SK-N-SH (cell line): ENCODE measurements at regions of chr16 and their contacts with region 1.

Region 1: DNA sequence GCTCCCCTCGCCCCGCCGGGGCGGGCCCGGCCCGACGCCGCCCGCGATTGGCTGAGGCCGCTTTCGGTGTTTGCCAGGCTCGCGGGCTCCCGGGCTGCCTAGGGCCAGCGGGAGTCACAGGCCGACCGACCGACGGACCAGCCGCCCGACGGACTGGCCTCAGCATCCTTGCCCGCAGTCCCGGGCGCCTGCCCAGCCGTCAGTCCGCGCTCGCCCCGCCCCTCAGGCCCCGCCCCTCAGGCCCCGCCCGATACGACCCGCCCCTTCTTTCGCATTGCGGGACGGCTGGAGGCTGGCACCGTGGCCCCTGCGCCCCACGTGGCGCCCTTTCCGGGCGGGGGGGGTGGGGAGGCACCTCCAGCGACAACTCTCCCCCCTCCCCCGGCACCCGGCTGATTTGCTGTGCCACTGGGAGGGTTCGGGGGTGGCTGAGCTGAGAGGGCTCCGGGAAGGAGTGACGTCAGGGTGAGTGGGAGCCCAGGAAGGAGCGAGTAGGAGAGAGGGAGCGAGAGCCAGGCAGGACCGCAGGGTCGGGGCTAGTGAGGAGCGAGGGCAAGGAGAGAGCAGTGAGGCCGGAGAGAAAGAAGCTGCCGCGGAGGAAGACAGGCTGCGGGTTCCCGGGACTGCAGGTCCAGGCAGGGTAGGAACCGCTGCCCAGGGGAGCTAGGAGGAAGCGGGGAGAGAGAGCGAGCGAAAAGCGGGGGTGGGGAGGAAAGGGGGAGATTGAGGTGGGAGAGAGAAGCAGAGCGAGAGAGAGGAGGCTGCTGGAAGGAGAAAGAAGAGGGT is at the start of gene ASPHD1:
- DNase-seq: peak; percentile 92
- H3K4me3 ChIP-seq: peak within 1 kb of the TSS; percentile 54 to 89
- H3K27ac ChIP-seq: peak within 1 kb of the TSS; percentile 90 to 94
- H3K4me1 ChIP-seq: peaks cover 0 to 20% of the 10 kb centered on the region in 2 experiments; a peak in 1 of 4 replicates
- H3K27me3 ChIP-seq: no peaks in the 10 kb centered on the region
- CTCF ChIP-seq: no peak
- EP300 ChIP-seq: no peak
- RAD21 ChIP-seq: no peak
- polyA plus RNA-seq, gene ASPHD1: 29.0 and 35.1 TPM in 2 replicates

Region 2: DNA sequence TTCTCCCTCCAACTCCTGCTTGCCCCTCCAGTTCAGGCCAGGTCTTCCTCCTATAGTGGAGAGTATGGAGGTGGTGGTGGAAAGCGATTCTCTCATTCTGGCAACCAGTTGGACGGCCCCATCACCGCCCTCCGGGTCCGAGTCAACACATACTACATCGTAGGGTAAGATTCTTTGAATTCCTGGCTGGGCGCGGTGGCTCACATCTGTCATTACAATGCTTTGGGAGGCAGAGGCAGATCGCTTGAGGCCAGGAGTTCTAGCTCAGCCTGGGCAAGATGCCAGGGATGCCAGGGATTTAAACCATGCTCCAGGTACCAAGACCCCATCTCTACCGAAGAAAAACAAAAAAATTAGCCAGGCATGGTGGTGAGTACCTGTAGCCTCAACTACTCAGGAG is 120.8 kb before region 1 on chr16:
- CTCF ChIA-PET with region 1: no interaction called
- POLR2A ChIA-PET with region 1: no interaction called
- DNase-seq: no peak
- H3K4me3 ChIP-seq: no peak overlapping the region
- H3K27ac ChIP-seq: no peak overlapping the region
- H3K4me1 ChIP-seq: no peaks in the 10 kb centered on the region
- H3K27me3 ChIP-seq: peaks cover 7% of the 10 kb centered on the region; the same call in 1 of the 2 replicates
- CTCF ChIP-seq: no peak
- EP300 ChIP-seq: no peak
- RAD21 ChIP-seq: no peak

Region 3: GRCh38 chr16:29815793-29816693 is 84.3 kb before region 1 on chr16 and contains the start of gene PAGR1:
- CTCF ChIA-PET with region 1: interaction called, 13 read pairs
- POLR2A ChIA-PET with region 1: interaction called, 4 read pairs
- DNase-seq: peak; percentile 93
- H3K4me3 ChIP-seq: peak within 1 kb of the TSS; percentile 72 to 77
- H3K27ac ChIP-seq: peak within 1 kb of the TSS; percentile 64 to 94
- H3K4me1 ChIP-seq: peaks cover 26 to 55% of the 10 kb centered on the region in 2 experiments; a peak in 3 of 4 replicates
- H3K27me3 ChIP-seq: no peaks in the 10 kb centered on the region
- CTCF ChIP-seq: peak; percentile 86
- EP300 ChIP-seq: no peak
- RAD21 ChIP-seq: peak; percentile 65
- polyA plus RNA-seq, gene PAGR1: 48.5 and 57.7 TPM in 2 replicates

Region 4: GRCh38 chr16:29839822-29840221 is 60.5 kb before region 1 on chr16:
- CTCF ChIA-PET with region 1: no interaction called
- POLR2A ChIA-PET with region 1: no interaction called
- DNase-seq: no peak
- H3K4me3 ChIP-seq: no peak overlapping the region
- H3K27ac ChIP-seq: no peak overlapping the region
- H3K4me1 ChIP-seq: no peaks in the 10 kb centered on the region
- H3K27me3 ChIP-seq: no peaks in the 10 kb centered on the region
- CTCF ChIP-seq: no peak
- EP300 ChIP-seq: no peak
- RAD21 ChIP-seq: no peak

Region 5: DNA sequence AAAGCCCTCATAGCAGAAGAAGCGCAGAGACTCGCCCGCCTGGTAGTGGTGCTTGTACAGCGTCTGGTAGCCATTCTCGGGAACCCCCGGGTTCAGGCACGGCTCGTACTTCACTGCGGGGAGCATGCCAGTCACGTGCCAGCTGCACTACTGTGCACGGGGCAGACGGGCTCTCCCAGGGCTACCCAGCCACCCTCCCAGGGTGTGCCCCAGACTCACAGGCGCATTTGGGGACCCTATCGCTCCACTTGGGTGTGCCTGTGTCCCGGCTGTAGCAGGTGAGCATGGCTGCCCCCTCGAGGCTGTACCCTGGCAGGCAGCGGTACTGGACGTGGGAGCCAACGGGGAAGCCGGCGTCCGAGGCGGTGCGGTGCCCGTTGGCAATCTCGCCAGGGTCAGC is 27.0 kb before region 1 on chr16:
- CTCF ChIA-PET with region 1: no interaction called
- POLR2A ChIA-PET with region 1: no interaction called
- DNase-seq: no peak
- H3K4me3 ChIP-seq: no peak overlapping the region
- H3K27ac ChIP-seq: no peak overlapping the region
- H3K4me1 ChIP-seq: no peaks in the 10 kb centered on the region
- H3K27me3 ChIP-seq: no peaks in the 10 kb centered on the region
- CTCF ChIP-seq: no peak
- EP300 ChIP-seq: no peak
- RAD21 ChIP-seq: no peak

Region 6: GRCh38 chr16:29883987-29884386 is 16.3 kb before region 1 on chr16:
- CTCF ChIA-PET with region 1: no interaction called
- POLR2A ChIA-PET with region 1: no interaction called
- DNase-seq: no peak
- H3K4me3 ChIP-seq: no peak overlapping the region
- H3K27ac ChIP-seq: no peak overlapping the region
- H3K4me1 ChIP-seq: no peaks in the 10 kb centered on the region
- H3K27me3 ChIP-seq: no peaks in the 10 kb centered on the region
- CTCF ChIP-seq: no peak
- EP300 ChIP-seq: no peak
- RAD21 ChIP-seq: no peak

Region 7: DNA sequence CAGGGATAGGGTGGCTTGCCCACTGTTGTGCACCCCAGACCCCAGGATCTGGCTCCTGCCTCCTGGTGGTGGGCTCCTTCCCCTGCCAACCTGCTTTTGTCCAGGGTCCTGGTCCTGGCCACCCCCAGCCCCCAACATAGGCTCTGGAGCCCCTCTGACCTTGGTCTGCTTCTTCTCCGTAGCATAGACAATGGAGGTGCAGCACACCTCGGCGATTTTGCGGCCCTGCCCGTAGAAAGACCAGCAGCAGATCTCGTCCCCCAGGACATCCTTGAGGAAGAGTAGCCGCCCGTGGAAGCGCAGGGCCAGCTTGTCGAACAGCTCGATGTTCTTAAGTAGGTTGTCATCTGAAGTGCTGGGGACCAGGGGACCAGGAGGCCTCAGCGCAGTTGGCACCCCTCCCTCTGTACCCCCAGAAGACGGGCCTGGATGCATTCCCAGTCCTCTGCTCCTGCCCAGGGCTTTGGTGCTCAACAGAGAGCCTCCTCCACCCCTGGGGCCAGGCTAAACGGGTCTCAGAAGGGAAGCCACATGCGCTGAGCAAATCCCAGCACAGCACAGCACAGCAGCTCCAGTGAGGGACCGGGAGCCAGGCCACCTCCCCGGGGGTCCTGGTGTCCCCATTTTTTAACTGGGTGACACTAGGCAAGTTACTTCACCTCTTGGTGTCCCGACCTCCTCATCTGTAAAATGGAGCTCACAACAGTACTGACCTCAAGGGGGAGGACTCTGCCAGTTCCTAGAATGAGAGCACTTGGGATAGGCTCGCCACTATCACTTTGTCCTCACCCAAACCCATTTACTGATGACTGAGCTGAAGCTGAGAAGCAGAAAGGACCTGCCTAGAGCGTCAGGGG is 10.8 kb after region 1 on chr16:
- CTCF ChIA-PET with region 1: interaction called, 8 read pairs
- POLR2A ChIA-PET with region 1: interaction called, 12 read pairs
- DNase-seq: no peak
- H3K4me3 ChIP-seq: no peak overlapping the region
- H3K27ac ChIP-seq: no peak overlapping the region
- H3K4me1 ChIP-seq: no peaks in the 10 kb centered on the region
- H3K27me3 ChIP-seq: no peaks in the 10 kb centered on the region
- CTCF ChIP-seq: no peak
- EP300 ChIP-seq: no peak
- RAD21 ChIP-seq: no peak

Region 8: GRCh38 chr16:29926005-29926710 is 25.9 kb after region 1 on chr16 and contains the start of gene KCTD13:
- CTCF ChIA-PET with region 1: interaction called, 7 read pairs
- POLR2A ChIA-PET with region 1: interaction called, 12 read pairs
- DNase-seq: peak; percentile 99
- H3K4me3 ChIP-seq: peak within 1 kb of the TSS; percentile 73 to 76
- H3K27ac ChIP-seq: peak within 1 kb of the TSS; percentile 81 to 87
- H3K4me1 ChIP-seq: peaks cover 15% of the 10 kb centered on the region in 2 experiments; a peak in 3 of 4 replicates
- H3K27me3 ChIP-seq: no peaks in the 10 kb centered on the region
- CTCF ChIP-seq: no peak
- EP300 ChIP-seq: no peak; a peak in 1 of 4 replicates
- RAD21 ChIP-seq: no peak; the same call in 1 of the 2 replicates
- polyA plus RNA-seq, gene KCTD13: 28.5 and 31.0 TPM in 2 replicates